Caco-2 (cell line): ENCODE measurements at regions of chr5 and their contacts with region 1.

Region 1: GRCh38 chr5:74418709-74419108 is 221.8 kb downstream of the ENC1 start:
- DNase-seq: peak; percentile 55 to 61
- H3K4me3 ChIP-seq: no peak overlapping the region
- H3K4me3 Mint-ChIP-seq: no peak overlapping the region
- H3K27ac Mint-ChIP-seq: no peak overlapping the region
- H3K4me1 ChIP-seq: peaks cover 42% of the 10 kb centered on the region
- H3K4me1 Mint-ChIP-seq: peaks cover 63% of the 10 kb centered on the region
- H3K27me3 ChIP-seq: no peaks in the 10 kb centered on the region
- H3K27me3 Mint-ChIP-seq: no peaks in the 10 kb centered on the region
- CTCF ChIP-seq: no peak

Region 2: DNA sequence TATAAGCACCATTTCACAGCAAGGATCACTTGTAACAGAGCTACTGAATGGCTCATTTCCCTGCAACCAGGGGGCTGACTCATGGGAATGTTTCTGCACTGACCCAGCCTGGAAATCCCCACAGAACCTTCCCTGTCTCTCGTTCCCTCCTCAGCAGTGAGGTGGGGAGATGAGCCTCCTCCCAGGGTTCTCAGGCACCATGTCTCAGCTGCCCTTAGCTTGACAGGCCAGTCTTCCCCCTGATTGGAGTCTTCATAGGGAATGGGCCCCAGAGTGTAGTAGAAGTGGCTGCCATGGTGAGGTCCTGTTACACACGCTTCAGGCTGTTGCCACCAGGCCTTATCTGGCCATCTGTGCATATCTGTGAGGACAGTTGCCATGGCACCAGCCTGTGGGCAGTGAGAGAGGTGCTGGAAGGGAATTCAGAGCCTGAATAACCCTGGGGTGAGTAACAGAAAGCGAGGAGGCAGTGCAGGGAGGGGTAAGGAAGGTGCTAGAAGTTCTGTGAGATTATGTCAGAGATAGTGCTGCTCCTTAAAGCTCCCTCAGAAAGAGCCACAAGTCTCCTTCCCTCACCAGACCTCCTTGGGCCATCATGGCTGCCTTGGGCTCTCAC is 102.5 kb before region 1 on chr5:
- CTCF ChIA-PET with region 1: no interaction called
- POLR2A ChIA-PET with region 1: no interaction called
- intact Hi-C with region 1: no loop called
- DNase-seq: peak; percentile 39 to 76
- H3K4me3 ChIP-seq: no peak overlapping the region
- H3K4me3 Mint-ChIP-seq: no peak overlapping the region
- H3K27ac Mint-ChIP-seq: peak overlapping the region; percentile 6
- H3K4me1 ChIP-seq: peaks cover 29% of the 10 kb centered on the region
- H3K4me1 Mint-ChIP-seq: peaks cover 20% of the 10 kb centered on the region
- H3K27me3 ChIP-seq: no peaks in the 10 kb centered on the region
- H3K27me3 Mint-ChIP-seq: no peaks in the 10 kb centered on the region
- CTCF ChIP-seq: no peak

Region 3: GRCh38 chr5:74408150-74409043 is 10.3 kb before region 1 on chr5:
- CTCF ChIA-PET with region 1: no interaction called
- POLR2A ChIA-PET with region 1: no interaction called
- intact Hi-C with region 1: loop called (anchors 1 kb)
- DNase-seq: peak; percentile 53 to 59
- H3K4me3 ChIP-seq: no peak overlapping the region
- H3K4me3 Mint-ChIP-seq: peak overlapping the region; percentile 61
- H3K27ac Mint-ChIP-seq: peak overlapping the region; percentile 19
- H3K4me1 ChIP-seq: peaks cover 73% of the 10 kb centered on the region
- H3K4me1 Mint-ChIP-seq: peaks cover 37% of the 10 kb centered on the region
- H3K27me3 ChIP-seq: no peaks in the 10 kb centered on the region
- H3K27me3 Mint-ChIP-seq: no peaks in the 10 kb centered on the region
- CTCF ChIP-seq: no peak

Region 4: GRCh38 chr5:74442466-74442865 is 23.8 kb after region 1 on chr5:
- CTCF ChIA-PET with region 1: no interaction called
- POLR2A ChIA-PET with region 1: no interaction called
- intact Hi-C with region 1: loop called (anchors 1 kb)
- DNase-seq: peak; percentile 55 to 71
- H3K4me3 ChIP-seq: no peak overlapping the region
- H3K4me3 Mint-ChIP-seq: peak overlapping the region; percentile 1
- H3K27ac Mint-ChIP-seq: no peak overlapping the region
- H3K4me1 ChIP-seq: peaks cover 10% of the 10 kb centered on the region
- H3K4me1 Mint-ChIP-seq: peaks cover 7% of the 10 kb centered on the region
- H3K27me3 ChIP-seq: no peaks in the 10 kb centered on the region
- H3K27me3 Mint-ChIP-seq: no peaks in the 10 kb centered on the region
- CTCF ChIP-seq: no peak